GM12878 (cell line): ENCODE measurements at regions of chr3 and their contacts with region 1.

Region 1: GRCh38 chr3:132722164-132723024 is at the start of gene NPHP3:
- DNase-seq: peak; percentile 67
- ATAC-seq: peak; percentile 93
- H3K4me3 ChIP-seq: peak within 1 kb of the TSS; percentile 85
- H3K27ac ChIP-seq: peak within 1 kb of the TSS; percentile 50
- H3K4me1 ChIP-seq: no peaks in the 10 kb centered on the region
- H3K27me3 ChIP-seq: no peaks in the 10 kb centered on the region
- CTCF ChIP-seq: no peak
- EP300 ChIP-seq: no peak
- POLR2A ChIP-seq: peak; percentile 88
- RAD21 ChIP-seq: no peak
- polyA plus RNA-seq, gene NPHP3: 0.84 to 0.95 TPM

Region 2: DNA sequence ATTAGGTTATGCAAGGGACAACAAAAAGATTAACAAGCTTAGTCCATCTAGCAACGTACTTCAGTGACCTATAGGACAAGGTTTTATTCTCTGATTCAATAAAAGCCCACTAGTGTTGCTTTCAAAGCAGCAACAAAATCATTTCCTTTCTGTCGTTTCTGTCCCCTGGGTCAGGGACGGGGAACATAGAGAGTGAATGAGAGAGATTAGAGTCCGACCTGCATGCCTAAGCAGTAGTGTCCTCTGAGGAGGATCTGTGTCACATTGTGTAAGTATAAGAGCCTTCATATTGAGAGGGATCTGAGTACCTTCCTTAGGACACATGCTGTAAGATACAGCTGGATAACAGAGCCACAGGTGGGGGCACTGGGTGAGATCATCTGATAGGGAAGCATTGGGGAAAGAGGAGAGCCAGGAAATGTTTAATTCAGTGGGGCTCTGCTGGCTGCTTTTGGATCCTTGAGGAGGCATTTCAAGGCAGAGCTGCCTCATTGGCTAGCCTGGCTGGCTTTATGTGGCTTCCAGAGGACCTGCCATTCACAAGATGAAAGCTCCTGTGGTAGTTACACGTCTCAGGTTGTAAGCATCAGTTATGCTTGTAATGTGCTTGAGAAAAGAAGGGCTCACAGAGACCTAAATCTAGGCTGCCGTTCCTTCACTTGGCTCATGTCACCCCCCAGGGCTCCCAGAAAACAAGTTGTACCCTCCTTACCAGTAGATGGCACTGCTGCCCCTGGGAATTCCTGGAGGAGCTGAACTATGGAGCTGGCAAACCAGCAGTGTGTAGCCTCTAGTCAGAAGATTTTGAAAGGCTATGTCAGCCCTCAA is 318.5 kb after region 1 on chr3:
- CTCF ChIA-PET with region 1: interaction called, 4 read pairs
- POLR2A ChIA-PET with region 1: no interaction called
- RAD21 ChIA-PET with region 1: interaction called, 5 read pairs
- SMC1A ChIA-PET with region 1: interaction called, 3 read pairs
- in situ Hi-C with region 1: no loop called
- intact Hi-C with region 1: loop called (anchors 2 kb)
- DNase-seq: peak; percentile 21
- ATAC-seq: peak; percentile 96
- H3K4me3 ChIP-seq: no peak overlapping the region
- H3K27ac ChIP-seq: no peak overlapping the region
- H3K4me1 ChIP-seq: no peaks in the 10 kb centered on the region
- H3K27me3 ChIP-seq: peaks cover 7 to 14% of the 10 kb centered on the region in 2 experiments
- CTCF ChIP-seq: peak; percentile 68 to 73 (median 70)
- EP300 ChIP-seq: no peak
- POLR2A ChIP-seq: no peak
- RAD21 ChIP-seq: peak; percentile 91

Region 3: GRCh38 chr3:133384331-133385027 is 662.1 kb after region 1 on chr3:
- CTCF ChIA-PET with region 1: interaction called, 43 read pairs
- POLR2A ChIA-PET with region 1: no interaction called
- RAD21 ChIA-PET with region 1: interaction called, 5 read pairs
- SMC1A ChIA-PET with region 1: interaction called, 7 read pairs
- in situ Hi-C with region 1: no loop called
- intact Hi-C with region 1: loop called (anchors 1 kb)
- DNase-seq: no peak
- ATAC-seq: peak; percentile 97
- H3K4me3 ChIP-seq: no peak overlapping the region
- H3K27ac ChIP-seq: no peak overlapping the region
- H3K4me1 ChIP-seq: no peaks in the 10 kb centered on the region
- H3K27me3 ChIP-seq: no peaks in the 10 kb centered on the region; a peak in 2 of 4 replicates
- CTCF ChIP-seq: peak; percentile 83 to 93 (median 91)
- EP300 ChIP-seq: no peak
- POLR2A ChIP-seq: no peak
- RAD21 ChIP-seq: peak; percentile 75

Region 4: GRCh38 chr3:133573054-133573628 is 850.7 kb after region 1 on chr3:
- CTCF ChIA-PET with region 1: no interaction called
- POLR2A ChIA-PET with region 1: no interaction called
- RAD21 ChIA-PET with region 1: no interaction called
- SMC1A ChIA-PET with region 1: interaction called, 3 read pairs
- in situ Hi-C with region 1: no loop called
- intact Hi-C with region 1: loop called (anchors 10 kb)
- DNase-seq: peak; percentile 99
- ATAC-seq: peak; percentile 83
- H3K4me3 ChIP-seq: peak overlapping the region; percentile 73
- H3K27ac ChIP-seq: peak overlapping the region; percentile 97
- H3K4me1 ChIP-seq: peaks cover 18% of the 10 kb centered on the region
- H3K27me3 ChIP-seq: no peaks in the 10 kb centered on the region
- CTCF ChIP-seq: peak in 2 of 3 experiments; percentile 3 to 14; a peak in 2 of 6 replicates
- EP300 ChIP-seq: no peak
- POLR2A ChIP-seq: no peak; the same call in 1 of the 2 replicates
- RAD21 ChIP-seq: no peak

Region 5: GRCh38 chr3:134485718-134486576 is 1763.6 kb after region 1 on chr3 and contains the starts of genes ANAPC13 and CEP63:
- CTCF ChIA-PET with region 1: interaction called, 3 read pairs
- POLR2A ChIA-PET with region 1: no interaction called
- RAD21 ChIA-PET with region 1: no interaction called
- SMC1A ChIA-PET with region 1: no interaction called
- in situ Hi-C with region 1: no loop called
- intact Hi-C with region 1: loop called (anchors 5 kb)
- DNase-seq: peak; percentile 96
- ATAC-seq: peak; percentile 90
- H3K4me3 ChIP-seq: peak within 1 kb of the TSS; percentile 82
- H3K27ac ChIP-seq: peak within 1 kb of the TSS; percentile 87
- H3K4me1 ChIP-seq: peaks cover 6% of the 10 kb centered on the region
- H3K27me3 ChIP-seq: no peaks in the 10 kb centered on the region
- CTCF ChIP-seq: no peak
- EP300 ChIP-seq: 0 out of 4 replicates have a peak, but pooled peaks of 1 of the 2 experiments have one; percentile 7
- POLR2A ChIP-seq: peak; percentile 89
- RAD21 ChIP-seq: no peak
- polyA plus RNA-seq, gene ANAPC13: 129 to 139 TPM
- polyA plus RNA-seq, gene CEP63: 14.0 to 16.4 TPM